CD8-positive, alpha-beta T cell (primary cell): ENCODE measurements at regions of chr15 and their contacts with region 1.

Region 1: GRCh38 chr15:50145451-50145872 is 26.4 kb upstream of the ATP8B4 start:
- DNase-seq: peak in 2 of 9 experiments; percentile 59 to 69
- ATAC-seq: no peak
- H3K4me3 ChIP-seq: no peak overlapping the region
- H3K4me3 Mint-ChIP-seq: no peak overlapping the region
- H3K27ac ChIP-seq: no peak overlapping the region
- H3K27ac Mint-ChIP-seq: no peak overlapping the region
- H3K4me1 ChIP-seq: no peaks in the 10 kb centered on the region
- H3K4me1 Mint-ChIP-seq: no peaks in the 10 kb centered on the region
- H3K27me3 ChIP-seq: no peaks in the 10 kb centered on the region
- H3K27me3 Mint-ChIP-seq: no peaks in the 10 kb centered on the region
- CTCF ChIP-seq: peak; percentile 73

Region 2: GRCh38 chr15:48352474-48353072 is 1792.9 kb before region 1 on chr15:
- CTCF ChIA-PET with region 1: no interaction called
- POLR2A ChIA-PET with region 1: no interaction called
- intact Hi-C with region 1: loop called in 1 of 2 experiments (anchors 10 kb)
- DNase-seq: peak; percentile 8 to 74 (median 49)
- ATAC-seq: peak; percentile 70
- H3K4me3 ChIP-seq: no peak overlapping the region
- H3K4me3 Mint-ChIP-seq: no peak overlapping the region
- H3K27ac ChIP-seq: no peak overlapping the region
- H3K27ac Mint-ChIP-seq: no peak overlapping the region
- H3K4me1 ChIP-seq: no peaks in the 10 kb centered on the region
- H3K4me1 Mint-ChIP-seq: peaks cover 2% of the 10 kb centered on the region
- H3K27me3 ChIP-seq: no peaks in the 10 kb centered on the region
- H3K27me3 Mint-ChIP-seq: peaks cover 6% of the 10 kb centered on the region
- CTCF ChIP-seq: peak; percentile 75

Region 3: GRCh38 chr15:48358229-48358641 is 1787.2 kb before region 1 on chr15:
- CTCF ChIA-PET with region 1: no interaction called
- POLR2A ChIA-PET with region 1: no interaction called
- intact Hi-C with region 1: loop called (anchors 2 to 10 kb)
- DNase-seq: peak in 1 of 9 experiments; percentile 17
- ATAC-seq: no peak
- H3K4me3 ChIP-seq: no peak overlapping the region
- H3K4me3 Mint-ChIP-seq: no peak overlapping the region
- H3K27ac ChIP-seq: no peak overlapping the region
- H3K27ac Mint-ChIP-seq: no peak overlapping the region
- H3K4me1 ChIP-seq: no peaks in the 10 kb centered on the region
- H3K4me1 Mint-ChIP-seq: peaks cover 6% of the 10 kb centered on the region
- H3K27me3 ChIP-seq: no peaks in the 10 kb centered on the region
- H3K27me3 Mint-ChIP-seq: peaks cover 4% of the 10 kb centered on the region
- CTCF ChIP-seq: no peak

Region 4: GRCh38 chr15:49421991-49422390 is 723.5 kb before region 1 on chr15:
- CTCF ChIA-PET with region 1: interaction called, 3 read pairs
- POLR2A ChIA-PET with region 1: no interaction called
- intact Hi-C with region 1: loop called in 1 of 2 experiments (anchors 1 kb)
- DNase-seq: peak in 7 of 9 experiments; percentile 8 to 69 (median 29)
- ATAC-seq: peak; percentile 44
- H3K4me3 ChIP-seq: no peak overlapping the region
- H3K4me3 Mint-ChIP-seq: peak overlapping the region; percentile 44
- H3K27ac ChIP-seq: no peak overlapping the region
- H3K27ac Mint-ChIP-seq: peak overlapping the region; percentile 62
- H3K4me1 ChIP-seq: no peaks in the 10 kb centered on the region
- H3K4me1 Mint-ChIP-seq: peaks cover 3% of the 10 kb centered on the region
- H3K27me3 ChIP-seq: no peaks in the 10 kb centered on the region
- H3K27me3 Mint-ChIP-seq: no peaks in the 10 kb centered on the region
- CTCF ChIP-seq: peak; percentile 80